Panc1 (cell line): ENCODE measurements at regions of chr19 and their contacts with region 1.

Region 1: GRCh38 chr19:45234089-45234869 is 10.9 kb downstream of the EXOC3L2 start:
- DNase-seq: no peak
- ATAC-seq: no peak
- H3K4me3 ChIP-seq: no peak overlapping the region
- H3K27ac ChIP-seq: no peak overlapping the region
- H3K4me1 ChIP-seq: no peaks in the 10 kb centered on the region; the same call in 1 of the 2 replicates
- H3K27me3 ChIP-seq: no peaks in the 10 kb centered on the region
- CTCF ChIP-seq: no peak

Region 2: DNA sequence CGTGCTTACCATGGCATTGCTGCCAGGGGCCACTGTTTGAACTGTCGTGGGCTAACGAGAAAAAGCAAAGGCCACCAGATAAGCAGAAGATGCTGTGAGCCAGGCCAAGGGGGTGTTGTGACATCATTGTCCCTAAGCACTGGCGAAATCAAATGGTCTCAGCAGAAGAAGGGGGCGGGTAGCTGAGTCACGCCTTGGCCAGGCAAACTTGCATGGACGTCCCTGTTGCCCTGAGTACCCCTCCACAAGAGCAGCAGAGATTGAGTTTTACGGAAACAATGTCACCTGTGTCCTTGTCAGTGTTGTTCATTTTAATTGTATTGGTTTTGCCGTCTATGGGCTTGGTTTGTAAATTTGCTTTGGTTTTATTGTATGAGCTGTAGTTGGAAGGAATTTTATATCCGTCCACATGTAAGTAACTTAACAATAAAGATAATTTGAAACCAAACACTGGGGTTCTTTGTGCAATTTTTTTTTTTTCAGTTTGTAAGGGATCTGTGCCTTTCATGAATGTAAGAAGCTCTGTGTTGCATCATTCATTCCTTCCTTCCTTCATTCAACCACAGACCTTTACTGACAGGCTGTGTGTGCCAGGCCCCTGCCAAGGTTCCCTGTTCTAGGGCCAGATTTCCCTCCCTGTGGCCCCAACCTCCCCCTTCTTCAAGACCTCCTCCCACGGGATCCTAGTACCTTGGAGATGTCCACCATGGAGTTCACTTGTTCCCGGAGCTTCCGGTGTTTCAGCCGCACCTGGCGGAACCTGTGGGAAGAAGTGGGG is 1465.8 kb before region 1 on chr19:
- CTCF ChIA-PET with region 1: no interaction called
- POLR2A ChIA-PET with region 1: interaction called, 14 read pairs
- in situ Hi-C with region 1: no loop called
- intact Hi-C with region 1: no loop called
- DNase-seq: no peak
- ATAC-seq: no peak
- H3K4me3 ChIP-seq: no peak overlapping the region
- H3K27ac ChIP-seq: no peak overlapping the region
- H3K4me1 ChIP-seq: peaks cover 19% of the 10 kb centered on the region
- H3K27me3 ChIP-seq: no peaks in the 10 kb centered on the region
- CTCF ChIP-seq: no peak